Heart left ventricle (tissue), 16 donors: ENCODE measurements at regions of chr11 and their contacts with region 1.

Region 1: GRCh38 chr11:87114093-87114492 is 76.4 kb downstream of the TMEM135 start:
- DNase-seq: no peak
- ATAC-seq: no peak
- H3K4me3 ChIP-seq: no peak overlapping the region
- H3K27ac ChIP-seq: no peak overlapping the region
- H3K4me1 ChIP-seq: peaks cover 0 to 13% (median 6%) of the 10 kb centered on the region in 12 donors
- H3K27me3 ChIP-seq: no peaks in the 10 kb centered on the region
- CTCF ChIP-seq: no peak
- POLR2A ChIP-seq: no peak

Region 2: DNA sequence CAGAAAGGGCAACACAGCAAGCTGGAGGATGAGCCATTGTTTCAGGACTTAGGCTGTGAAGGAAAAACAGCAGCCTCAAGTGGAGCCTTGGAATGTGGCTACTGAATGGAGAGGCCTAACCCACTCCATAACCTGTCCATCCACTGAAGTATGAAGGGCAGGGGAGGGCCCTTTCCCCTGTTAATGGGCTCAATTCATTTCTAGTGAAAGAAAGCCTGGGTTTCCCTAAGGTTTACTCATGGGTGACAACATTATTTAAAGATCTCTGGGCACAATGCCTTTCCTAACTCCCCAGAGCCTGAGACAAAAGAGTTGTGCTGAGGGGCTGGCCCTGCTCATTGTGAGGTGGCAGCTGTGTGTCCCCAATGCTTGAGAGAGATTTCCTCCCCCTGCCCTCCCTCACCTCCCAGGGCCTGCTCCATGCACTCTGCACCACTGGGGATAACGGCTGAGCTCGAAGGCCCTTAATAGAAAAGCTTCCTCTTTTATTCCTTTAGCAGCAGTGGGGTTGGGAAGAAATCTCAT is 525.5 kb before region 1 on chr11:
- intact Hi-C with region 1: no loop called
- DNase-seq: peak in 1 of 5 donors; percentile 44
- ATAC-seq: peak; percentile 11 to 41 (median 28)
- H3K4me3 ChIP-seq: no peak overlapping the region
- H3K27ac ChIP-seq: peak overlapping the region in 8 of 12 donors; percentile 8 to 63 (median 30)
- H3K4me1 ChIP-seq: peaks cover 0 to 42% (median 23%) of the 10 kb centered on the region in 12 donors
- H3K27me3 ChIP-seq: no peaks in the 10 kb centered on the region
- CTCF ChIP-seq: no peak
- POLR2A ChIP-seq: no peak

Region 3: DNA sequence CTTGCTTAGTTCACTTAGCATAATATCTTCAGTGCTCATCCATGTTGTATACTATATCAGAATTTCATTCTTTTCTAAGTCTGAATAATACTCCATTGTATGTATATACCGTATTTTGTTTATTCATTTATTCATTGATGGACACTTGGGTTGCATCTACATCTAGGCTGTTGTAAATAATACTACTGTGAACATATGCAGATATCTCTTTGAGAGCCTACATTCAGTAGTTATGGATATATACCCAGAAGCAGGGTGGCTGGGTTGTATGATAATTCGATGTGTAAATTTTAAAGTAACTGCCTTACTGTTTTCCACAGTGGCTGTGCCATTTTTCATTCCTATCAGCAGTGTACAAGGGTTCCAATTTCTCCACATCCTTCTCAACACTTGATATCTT is 40.2 kb after region 1 on chr11:
- intact Hi-C with region 1: no loop called
- DNase-seq: no peak
- ATAC-seq: no peak
- H3K4me3 ChIP-seq: no peak overlapping the region
- H3K27ac ChIP-seq: no peak overlapping the region
- H3K4me1 ChIP-seq: peaks cover 0 to 27% (median 0%) of the 10 kb centered on the region in 12 donors
- H3K27me3 ChIP-seq: no peaks in the 10 kb centered on the region
- CTCF ChIP-seq: no peak
- POLR2A ChIP-seq: no peak

Region 4: DNA sequence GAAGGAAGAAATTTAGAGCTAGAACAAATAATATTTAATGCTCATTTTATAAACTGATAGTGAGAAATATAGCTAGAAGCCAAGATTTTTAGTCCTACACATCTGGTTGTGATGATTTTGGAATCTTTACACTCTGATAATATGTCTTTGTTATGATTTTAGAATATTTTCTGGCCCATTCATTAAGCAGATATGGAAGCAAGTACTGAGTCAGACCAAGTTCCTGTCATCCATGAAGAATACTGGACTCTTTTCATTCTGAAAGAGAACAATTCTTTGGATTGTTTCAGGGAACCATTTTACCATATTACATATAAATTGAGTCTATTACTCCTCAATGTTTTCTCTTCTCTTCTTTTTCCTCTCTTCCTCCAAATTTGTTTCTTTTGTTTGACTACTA is 151.0 kb after region 1 on chr11:
- intact Hi-C with region 1: loop called in 1 of 10 experiments (anchors 10 kb)
- DNase-seq: no peak
- ATAC-seq: no peak
- H3K4me3 ChIP-seq: no peak overlapping the region
- H3K27ac ChIP-seq: peak overlapping the region in 1 of 12 donors; percentile 10
- H3K4me1 ChIP-seq: peaks cover 0 to 24% (median 7%) of the 10 kb centered on the region in 12 donors
- H3K27me3 ChIP-seq: no peaks in the 10 kb centered on the region
- CTCF ChIP-seq: no peak
- POLR2A ChIP-seq: no peak